ENCODE measurements at regions of chr4 and their contacts with region 1.

Region 1: GRCh38 chr4:109559983-109560686 is at the start of gene MCUB:
- DNase-seq: peak; percentile 92
- H3K4me3 Mint-ChIP-seq: peak within 1 kb of the TSS; percentile 92
- H3K27ac Mint-ChIP-seq: peak within 1 kb of the TSS; percentile 97
- H3K4me1 Mint-ChIP-seq: peaks cover 53% of the 10 kb centered on the region
- H3K27me3 Mint-ChIP-seq: no peaks in the 10 kb centered on the region
- total RNA-seq, gene MCUB: 40.6 and 46.0 TPM in 2 replicates

Region 2: DNA sequence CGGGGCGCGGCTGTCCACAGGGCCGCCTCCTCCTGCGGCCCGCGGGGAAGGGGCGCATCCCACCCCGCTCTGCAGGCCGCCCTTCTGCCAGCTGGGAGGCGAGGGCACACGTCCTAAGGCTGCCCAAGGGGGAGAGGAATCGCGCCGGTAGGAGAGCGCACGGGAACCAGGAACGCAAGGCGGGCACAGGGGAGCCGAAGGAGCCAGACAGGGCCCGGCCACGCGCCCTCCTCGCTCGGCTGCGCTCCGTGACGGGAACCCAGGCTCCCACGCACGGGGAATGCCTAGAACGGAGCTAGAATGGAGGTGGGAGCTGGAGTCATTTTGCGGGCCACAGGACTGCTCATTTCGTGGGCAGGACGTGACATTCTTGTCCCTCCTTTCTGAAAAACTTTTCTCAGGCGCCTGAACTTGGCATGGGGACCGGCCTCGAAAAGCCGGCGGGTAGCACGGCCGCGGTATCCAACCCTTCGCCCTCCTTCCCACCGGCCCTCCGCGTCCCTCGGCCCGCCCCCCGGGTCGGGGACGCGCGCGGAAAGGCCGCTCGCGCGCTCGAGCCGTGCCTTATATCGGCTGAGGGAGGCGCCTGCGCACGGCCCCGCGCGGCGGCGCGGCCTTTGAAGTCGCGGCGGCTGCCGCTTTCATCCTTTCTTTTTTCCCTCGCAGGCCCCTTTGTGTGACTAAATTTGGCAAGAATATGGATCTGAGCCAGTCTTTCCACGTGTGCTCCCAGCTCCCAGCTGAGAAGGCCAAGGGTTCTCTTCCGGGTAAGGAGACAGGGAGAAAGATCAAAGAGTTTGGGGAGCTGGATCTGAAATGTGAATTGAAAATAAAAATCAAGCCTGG is 1387.2 kb before region 1 on chr4:
- intact Hi-C with region 1: loop called (anchors 5 kb)
- DNase-seq: peak; percentile 70
- H3K4me3 Mint-ChIP-seq: peak overlapping the region; percentile 91
- H3K27ac Mint-ChIP-seq: peak overlapping the region; percentile 94
- H3K4me1 Mint-ChIP-seq: peaks cover 61% of the 10 kb centered on the region
- H3K27me3 Mint-ChIP-seq: peaks cover 12% of the 10 kb centered on the region

Region 3: DNA sequence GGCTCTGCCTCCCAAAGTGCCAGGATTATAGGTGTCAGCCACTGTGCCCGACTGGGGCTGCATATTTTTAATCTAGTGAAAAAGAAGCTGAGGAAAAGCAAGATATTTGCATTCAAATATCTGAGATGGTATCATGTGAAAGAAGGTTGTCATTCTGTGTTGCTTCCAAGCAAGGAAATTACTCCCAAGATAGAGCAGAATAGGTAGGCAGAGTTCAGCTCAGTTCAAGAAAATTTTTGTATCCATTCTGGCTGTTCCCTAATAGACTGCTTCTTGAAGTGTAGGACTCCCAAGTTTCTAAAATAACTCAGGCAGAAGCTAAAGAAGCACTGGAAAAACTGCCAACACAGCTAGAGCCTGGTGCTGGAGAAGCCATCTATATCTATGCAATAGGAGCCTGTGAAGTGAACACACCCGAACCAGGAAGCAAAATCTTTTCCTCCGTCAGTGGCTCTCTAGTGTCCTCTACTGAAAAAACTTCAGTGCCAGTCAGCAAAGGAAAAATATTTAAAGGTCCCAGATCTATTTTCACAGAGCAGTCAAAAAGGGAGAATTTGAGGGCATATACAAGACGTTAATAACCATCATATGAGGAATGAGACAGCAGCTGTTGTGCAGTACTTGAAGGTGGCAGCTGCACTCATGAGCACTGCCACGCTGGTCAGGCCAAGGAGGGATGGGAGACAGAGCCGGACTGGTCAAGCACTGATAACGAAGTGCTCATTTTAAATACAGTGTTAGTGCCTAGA is 14.1 kb after region 1 on chr4:
- intact Hi-C with region 1: loop called (anchors 1 kb)
- DNase-seq: no peak
- H3K4me3 Mint-ChIP-seq: peak overlapping the region; percentile 35
- H3K27ac Mint-ChIP-seq: no peak overlapping the region
- H3K4me1 Mint-ChIP-seq: peaks cover 42% of the 10 kb centered on the region
- H3K27me3 Mint-ChIP-seq: no peaks in the 10 kb centered on the region

Region 4: DNA sequence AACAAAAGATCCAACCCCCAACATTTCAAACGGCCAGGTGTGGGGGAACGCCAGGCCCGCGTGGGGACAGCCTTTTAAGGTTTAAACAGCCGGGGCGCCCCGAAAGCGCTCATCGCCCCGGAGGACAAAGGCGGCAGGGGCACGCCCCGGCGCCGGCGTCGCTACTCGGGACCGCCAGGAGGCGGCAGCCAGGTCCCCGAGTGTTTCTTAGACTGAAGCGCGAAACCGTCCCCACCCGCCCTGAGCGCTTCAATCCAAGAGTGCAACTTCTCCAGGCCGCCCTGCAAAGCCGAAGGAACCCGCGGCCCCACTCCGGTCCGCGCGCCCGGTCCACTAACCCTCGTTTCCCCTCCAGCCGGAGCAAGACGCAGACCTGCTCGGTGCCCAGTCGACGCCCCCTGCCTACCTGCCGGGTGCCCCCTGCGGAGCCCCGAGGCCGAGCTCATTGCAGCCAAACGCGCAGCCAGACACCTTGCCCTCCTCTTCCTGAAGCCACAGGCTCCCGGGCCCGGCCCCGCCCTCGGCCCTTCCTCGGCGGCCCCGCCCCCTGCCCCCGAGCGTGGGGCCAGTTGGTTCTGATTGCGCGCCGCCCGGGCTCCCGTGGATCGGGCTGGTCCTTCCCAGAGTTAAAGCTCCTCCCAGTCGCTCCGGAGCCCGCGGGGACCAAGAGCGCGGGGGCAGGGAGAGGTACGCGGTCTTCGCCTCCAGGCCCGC is 143.0 kb after region 1 on chr4 and contains the start of gene CASP6:
- intact Hi-C with region 1: loop called (anchors 1 kb)
- DNase-seq: peak; percentile 68
- H3K4me3 Mint-ChIP-seq: peak within 1 kb of the TSS; percentile 85
- H3K27ac Mint-ChIP-seq: peak within 1 kb of the TSS; percentile 93
- H3K4me1 Mint-ChIP-seq: peaks cover 45% of the 10 kb centered on the region
- H3K27me3 Mint-ChIP-seq: no peaks in the 10 kb centered on the region
- total RNA-seq, gene CASP6: 29.5 and 32.9 TPM in 2 replicates

Region 5: DNA sequence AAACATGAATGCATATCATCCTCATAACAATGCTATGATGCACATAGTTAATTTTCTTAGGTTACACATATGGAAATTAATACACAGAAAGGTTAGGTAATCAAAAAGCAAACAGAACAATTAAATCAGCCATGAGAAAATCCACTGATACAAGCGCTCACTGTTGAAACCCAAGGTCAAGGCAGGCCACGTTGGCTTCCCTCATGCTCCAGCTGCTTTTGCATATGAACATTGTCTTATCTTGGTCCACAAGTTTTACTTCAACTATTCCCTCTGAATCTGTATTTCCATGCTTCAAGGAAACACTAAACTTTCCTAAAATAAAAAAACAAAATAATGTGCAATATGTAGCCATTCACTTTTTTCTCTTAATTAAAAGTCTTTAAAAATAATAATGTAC is 204.2 kb after region 1 on chr4:
- intact Hi-C with region 1: no loop called
- DNase-seq: no peak
- H3K4me3 Mint-ChIP-seq: no peak overlapping the region
- H3K27ac Mint-ChIP-seq: no peak overlapping the region
- H3K4me1 Mint-ChIP-seq: peaks cover 12% of the 10 kb centered on the region
- H3K27me3 Mint-ChIP-seq: peaks cover 2% of the 10 kb centered on the region

Region 6: GRCh38 chr4:110087070-110087708 is 527.1 kb after region 1 on chr4:
- intact Hi-C with region 1: loop called (anchors 5 kb)
- DNase-seq: no peak
- H3K4me3 Mint-ChIP-seq: no peak overlapping the region
- H3K27ac Mint-ChIP-seq: peak overlapping the region; percentile 38
- H3K4me1 Mint-ChIP-seq: peaks cover 72% of the 10 kb centered on the region
- H3K27me3 Mint-ChIP-seq: no peaks in the 10 kb centered on the region

Measured in activated T-helper 1 cell treated with anti-CD3 and anti-CD28 coated beads, Interleukin-12 subunit alpha, Interleukin-12 subunit beta, Interleukin-2, Interleukin-4 antibody, amounts not matched to agents 30 ng/mL and 10 ng/mL and 1 ng/mL, durations not matched to agents 14 hours and 24 hours and 36 hours (primary cell).